Lower leg skin (tissue), 4 donors: ENCODE measurements at regions of chr10 and their contacts with region 1.

Region 1: GRCh38 chr10:104350127-104350635 is 3.5 kb upstream of the CFAP58 start:
- DNase-seq: peak in 1 of 2 donors; percentile 31
- H3K4me3 ChIP-seq: no peak overlapping the region
- CTCF ChIP-seq: peak in 1 of 3 donors; percentile 49
- POLR2A ChIP-seq: no peak

Region 2: DNA sequence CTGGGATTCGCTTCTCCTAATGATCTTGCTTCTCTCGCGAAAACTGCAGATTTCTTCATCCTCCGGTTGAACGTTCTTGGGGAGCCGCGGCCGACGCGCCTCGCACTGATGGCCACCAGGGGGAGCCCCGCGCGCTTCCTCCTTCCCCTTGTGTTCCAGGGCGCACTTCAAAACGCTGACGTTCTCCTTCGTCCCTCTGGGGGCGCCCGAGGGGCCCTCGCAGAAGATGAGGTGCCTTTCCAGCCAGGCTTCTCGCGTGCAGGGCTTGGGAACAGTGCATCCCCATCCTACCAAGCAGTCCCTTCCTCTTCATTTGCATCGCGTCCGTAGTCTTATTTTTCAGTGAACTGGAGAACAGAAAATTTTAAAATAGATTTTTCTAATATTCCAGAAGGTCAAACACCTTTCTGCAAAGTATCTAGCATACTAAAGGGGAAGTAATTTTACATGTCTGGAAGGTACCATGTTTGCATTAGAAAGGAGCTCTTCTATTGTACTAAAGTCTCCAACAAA is 58.7 kb before region 1 on chr10:
- intact Hi-C with region 1: loop called (anchors 2 kb)
- DNase-seq: peak; percentile 90 to 98
- H3K4me3 ChIP-seq: no peak overlapping the region
- CTCF ChIP-seq: peak in 2 of 3 donors; percentile 79 to 98
- POLR2A ChIP-seq: no peak